GM10248 (cell line): ENCODE measurements at regions of chr3 and their contacts with region 1.

Region 1: DNA sequence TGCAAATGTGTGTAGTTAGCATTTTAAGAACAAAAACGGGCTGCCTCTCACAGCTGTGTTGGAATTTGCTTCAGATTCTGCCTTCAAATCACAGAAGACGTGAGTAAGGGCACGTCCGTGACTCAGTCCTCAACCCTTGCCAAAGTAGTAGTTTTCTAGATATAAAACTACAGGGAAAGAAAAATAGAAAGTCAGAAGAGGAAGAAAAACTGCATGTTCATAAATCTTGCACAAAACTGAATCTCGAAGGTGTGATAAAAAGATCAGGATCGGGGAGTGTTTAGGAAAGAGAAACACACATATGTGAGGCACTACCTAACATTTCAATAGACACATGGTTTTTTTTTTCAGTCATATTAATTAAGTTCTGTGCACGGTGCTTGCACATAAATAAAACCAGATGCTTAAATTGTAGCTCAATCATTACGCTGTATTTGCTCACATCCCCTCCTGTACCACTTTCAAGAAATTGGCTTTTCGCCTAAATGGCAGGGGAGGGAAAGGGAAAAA is 71.7 kb downstream of the P3H2 start:
- DNase-seq: no peak
- CTCF ChIP-seq: no peak

Region 2: GRCh38 chr3:190032924-190033323 is 16.1 kb before region 1 on chr3:
- CTCF ChIA-PET with region 1: interaction called, 10 read pairs
- POLR2A ChIA-PET with region 1: no interaction called
- DNase-seq: no peak
- CTCF ChIP-seq: no peak